ENCODE measurements at regions of chr2 and their contacts with region 1.

Region 1: DNA sequence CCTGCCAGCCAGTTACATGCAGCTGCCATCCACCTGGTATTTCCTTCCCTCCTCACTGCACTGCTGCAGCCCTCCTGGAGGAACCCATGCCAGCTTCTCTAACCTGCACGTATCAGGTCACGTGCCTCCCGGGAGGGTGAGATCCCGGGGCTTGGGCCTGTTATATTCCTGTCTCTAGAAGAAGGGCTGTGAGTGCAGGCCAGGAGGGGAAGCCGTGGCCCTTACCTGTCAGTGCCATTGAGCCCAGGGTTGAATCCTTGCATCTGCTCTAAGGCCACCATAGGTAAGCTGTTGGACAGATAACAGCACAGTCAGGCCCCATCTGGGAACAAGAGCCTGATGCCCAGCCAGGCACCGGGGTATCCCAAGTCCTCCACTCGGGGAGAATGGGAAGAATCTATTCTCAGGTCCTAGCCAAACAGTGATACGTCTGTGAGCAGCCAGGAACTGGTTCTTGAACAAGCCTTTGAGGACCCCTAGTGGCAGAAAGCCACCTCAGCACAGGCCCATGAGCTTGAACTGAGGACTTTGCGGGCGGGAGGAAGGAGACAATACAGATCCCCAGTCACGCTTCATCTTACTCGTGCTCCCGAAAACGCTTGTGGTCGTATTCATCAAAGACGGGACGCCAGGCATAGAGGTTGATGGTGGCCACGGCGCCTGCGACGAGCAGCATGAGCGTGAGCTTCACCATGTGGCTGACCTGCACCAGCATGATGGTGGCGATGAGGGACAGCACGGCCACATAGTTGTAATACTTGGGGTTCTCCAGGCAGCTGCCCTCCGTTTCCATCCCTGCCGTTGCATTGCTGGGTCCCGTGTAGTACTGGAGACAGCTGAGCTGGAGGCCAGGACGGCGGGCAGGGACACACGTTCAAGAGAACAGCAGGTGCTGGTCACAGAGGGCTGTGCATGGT is 34.4 kb downstream of the CENPO start:
- DNase-seq: peak; percentile 89
- ATAC-seq: peak; percentile 97
- H3K4me3 ChIP-seq: no peak overlapping the region
- H3K27ac ChIP-seq: no peak overlapping the region
- H3K4me1 ChIP-seq: no peaks in the 10 kb centered on the region
- H3K27me3 ChIP-seq: no peaks in the 10 kb centered on the region
- CTCF ChIP-seq: peak; percentile 94
- POLR2A ChIP-seq: peak; percentile 37; the same call in 1 of the 2 replicates
- RAD21 ChIP-seq: peak; percentile 94

Region 2: GRCh38 chr2:23532391-23533337 is 1294.9 kb before region 1 on chr2:
- CTCF ChIA-PET with region 1: no interaction called
- POLR2A ChIA-PET with region 1: no interaction called
- dilution Hi-C with region 1: no loop called
- in situ Hi-C with region 1: no loop called
- intact Hi-C with region 1: no loop called
- DNase-seq: no peak
- ATAC-seq: peak; percentile 69
- H3K4me3 ChIP-seq: no peak overlapping the region
- H3K27ac ChIP-seq: no peak overlapping the region
- H3K4me1 ChIP-seq: peaks cover 8% of the 10 kb centered on the region
- H3K27me3 ChIP-seq: no peaks in the 10 kb centered on the region
- CTCF ChIP-seq: no peak
- POLR2A ChIP-seq: no peak
- RAD21 ChIP-seq: no peak

Region 3: GRCh38 chr2:24123922-24124580 is 703.5 kb before region 1 on chr2:
- CTCF ChIA-PET with region 1: interaction called, 10 read pairs
- POLR2A ChIA-PET with region 1: no interaction called
- dilution Hi-C with region 1: no loop called
- in situ Hi-C with region 1: no loop called
- intact Hi-C with region 1: no loop called
- DNase-seq: peak; percentile 34
- ATAC-seq: peak; percentile 2; the same call in 1 of the 2 replicates
- H3K4me3 ChIP-seq: peak overlapping the region; percentile 84
- H3K27ac ChIP-seq: peak overlapping the region; percentile 82
- H3K4me1 ChIP-seq: no peaks in the 10 kb centered on the region
- H3K27me3 ChIP-seq: no peaks in the 10 kb centered on the region
- CTCF ChIP-seq: no peak
- POLR2A ChIP-seq: no peak
- RAD21 ChIP-seq: no peak

Region 4: GRCh38 chr2:24421668-24422067 is 405.9 kb before region 1 on chr2:
- CTCF ChIA-PET with region 1: interaction called, 4 read pairs
- POLR2A ChIA-PET with region 1: no interaction called
- dilution Hi-C with region 1: no loop called
- in situ Hi-C with region 1: no loop called
- intact Hi-C with region 1: loop called (anchors 1 kb)
- DNase-seq: peak; percentile 24
- ATAC-seq: peak; percentile 74
- H3K4me3 ChIP-seq: no peak overlapping the region
- H3K27ac ChIP-seq: no peak overlapping the region
- H3K4me1 ChIP-seq: no peaks in the 10 kb centered on the region
- H3K27me3 ChIP-seq: peaks cover 7% of the 10 kb centered on the region
- CTCF ChIP-seq: peak; percentile 55
- POLR2A ChIP-seq: no peak
- RAD21 ChIP-seq: peak; percentile 67

Region 5: GRCh38 chr2:24613154-24613814 is 214.3 kb before region 1 on chr2:
- CTCF ChIA-PET with region 1: no interaction called
- POLR2A ChIA-PET with region 1: no interaction called
- dilution Hi-C with region 1: no loop called
- in situ Hi-C with region 1: loop called (anchors 5 kb)
- intact Hi-C with region 1: loop called (anchors 1 kb)
- DNase-seq: peak; percentile 76
- ATAC-seq: peak; percentile 93
- H3K4me3 ChIP-seq: no peak overlapping the region
- H3K27ac ChIP-seq: no peak overlapping the region
- H3K4me1 ChIP-seq: no peaks in the 10 kb centered on the region
- H3K27me3 ChIP-seq: no peaks in the 10 kb centered on the region
- CTCF ChIP-seq: peak; percentile 56
- POLR2A ChIP-seq: no peak
- RAD21 ChIP-seq: peak; percentile 61

Region 6: DNA sequence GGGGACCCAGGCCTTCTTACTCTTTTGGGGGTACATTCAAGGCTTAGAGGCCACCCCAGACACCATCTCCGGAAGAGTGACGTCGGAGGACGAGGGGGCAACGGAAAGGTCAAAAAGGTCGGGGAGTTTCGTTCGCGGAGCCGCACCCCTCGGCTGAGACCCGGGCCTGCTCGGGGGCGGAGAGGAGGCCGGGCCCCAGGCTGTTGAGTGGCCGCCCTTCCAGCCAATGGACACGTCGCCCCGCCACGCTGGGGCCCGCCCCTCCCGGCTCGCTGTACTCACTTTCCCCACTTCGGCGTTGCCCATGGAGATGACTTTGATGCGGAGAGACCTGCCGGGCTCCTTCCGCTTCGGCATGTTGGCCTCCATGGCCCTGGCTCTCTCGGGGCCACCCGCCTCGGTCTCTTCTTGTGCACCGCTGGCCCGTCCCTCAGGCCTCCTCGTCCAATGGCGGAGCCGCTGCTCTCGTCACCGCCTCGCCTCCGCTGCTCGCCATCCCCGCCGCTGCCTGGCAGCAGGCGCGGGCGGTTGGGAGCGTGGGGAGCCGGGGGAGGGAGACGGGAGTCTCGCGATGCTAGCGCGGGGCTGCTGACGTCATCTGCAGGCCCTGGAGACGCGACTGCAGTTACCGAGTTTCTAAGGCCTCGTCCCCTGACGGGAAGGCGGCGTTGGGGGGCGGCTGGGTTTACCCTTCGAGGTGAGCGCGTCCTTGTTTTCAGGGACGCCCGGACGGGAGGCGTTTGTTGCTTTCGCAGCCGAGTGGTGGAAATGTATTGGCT is 144.1 kb after region 1 on chr2 and contains the start of gene DNAJC27:
- CTCF ChIA-PET with region 1: no interaction called
- POLR2A ChIA-PET with region 1: no interaction called
- dilution Hi-C with region 1: no loop called
- in situ Hi-C with region 1: no loop called
- intact Hi-C with region 1: loop called (anchors 5 kb)
- DNase-seq: peak; percentile 98
- ATAC-seq: peak; percentile 97
- H3K4me3 ChIP-seq: peak within 1 kb of the TSS; percentile 72
- H3K27ac ChIP-seq: peak within 1 kb of the TSS; percentile 96
- H3K4me1 ChIP-seq: no peaks in the 10 kb centered on the region
- H3K27me3 ChIP-seq: no peaks in the 10 kb centered on the region
- CTCF ChIP-seq: no peak
- POLR2A ChIP-seq: peak; percentile 97
- RAD21 ChIP-seq: no peak
- total RNA-seq, gene DNAJC27: 2.0 and 2.8 TPM in 2 replicates

Region 7: DNA sequence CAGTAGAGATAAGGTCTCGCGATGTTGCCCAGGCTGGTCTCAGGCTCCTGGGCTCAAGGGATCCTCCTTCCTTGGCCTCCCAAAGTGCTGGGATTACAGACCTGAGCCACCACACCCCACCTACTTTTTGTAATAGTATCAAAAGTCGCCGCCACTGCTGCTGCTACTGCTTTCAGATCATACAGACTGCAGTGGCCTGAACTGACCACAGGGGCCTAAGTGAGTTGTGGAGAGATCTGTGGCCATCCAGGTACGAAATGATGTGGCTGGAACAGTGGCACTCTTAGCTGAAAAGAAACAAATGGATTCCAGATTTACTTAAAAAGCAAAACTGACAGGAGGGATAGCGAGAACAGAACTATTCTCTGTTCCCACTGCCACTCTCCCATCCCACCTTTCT is 373.7 kb after region 1 on chr2:
- CTCF ChIA-PET with region 1: no interaction called
- POLR2A ChIA-PET with region 1: no interaction called
- dilution Hi-C with region 1: no loop called
- in situ Hi-C with region 1: no loop called
- intact Hi-C with region 1: loop called (anchors 10 kb)
- DNase-seq: no peak
- ATAC-seq: peak; percentile 48; the same call in 1 of the 2 replicates
- H3K4me3 ChIP-seq: no peak overlapping the region
- H3K27ac ChIP-seq: no peak overlapping the region
- H3K4me1 ChIP-seq: peaks cover 1% of the 10 kb centered on the region; the same call in 1 of the 2 replicates
- H3K27me3 ChIP-seq: no peaks in the 10 kb centered on the region; the same call in 1 of the 2 replicates
- CTCF ChIP-seq: 0 out of 2 replicates have a peak, but pooled peaks have one; percentile 18
- POLR2A ChIP-seq: no peak
- RAD21 ChIP-seq: no peak

Region 8: GRCh38 chr2:26223018-26223417 is 1395.4 kb after region 1 on chr2:
- CTCF ChIA-PET with region 1: no interaction called
- POLR2A ChIA-PET with region 1: no interaction called
- dilution Hi-C with region 1: no loop called
- in situ Hi-C with region 1: no loop called
- intact Hi-C with region 1: no loop called
- DNase-seq: no peak
- ATAC-seq: no peak
- H3K4me3 ChIP-seq: no peak overlapping the region
- H3K27ac ChIP-seq: no peak overlapping the region
- H3K4me1 ChIP-seq: no peaks in the 10 kb centered on the region
- H3K27me3 ChIP-seq: no peaks in the 10 kb centered on the region
- CTCF ChIP-seq: no peak
- POLR2A ChIP-seq: no peak
- RAD21 ChIP-seq: no peak

Measured in IMR-90 (cell line).